OCI-LY7 (cell line): ENCODE measurements at regions of chr1 and their contacts with region 1.

Region 1: GRCh38 chr1:148334339-148335130 is 148.6 kb downstream of the PPIAL4G start:
- DNase-seq: peak; percentile 91
- H3K4me3 ChIP-seq: peak overlapping the region; percentile 70
- H3K27ac ChIP-seq: peak overlapping the region; percentile 80
- H3K4me1 ChIP-seq: peaks cover 31% of the 10 kb centered on the region
- CTCF ChIP-seq: no peak; the same call in 1 of the 2 replicates

Region 2: DNA sequence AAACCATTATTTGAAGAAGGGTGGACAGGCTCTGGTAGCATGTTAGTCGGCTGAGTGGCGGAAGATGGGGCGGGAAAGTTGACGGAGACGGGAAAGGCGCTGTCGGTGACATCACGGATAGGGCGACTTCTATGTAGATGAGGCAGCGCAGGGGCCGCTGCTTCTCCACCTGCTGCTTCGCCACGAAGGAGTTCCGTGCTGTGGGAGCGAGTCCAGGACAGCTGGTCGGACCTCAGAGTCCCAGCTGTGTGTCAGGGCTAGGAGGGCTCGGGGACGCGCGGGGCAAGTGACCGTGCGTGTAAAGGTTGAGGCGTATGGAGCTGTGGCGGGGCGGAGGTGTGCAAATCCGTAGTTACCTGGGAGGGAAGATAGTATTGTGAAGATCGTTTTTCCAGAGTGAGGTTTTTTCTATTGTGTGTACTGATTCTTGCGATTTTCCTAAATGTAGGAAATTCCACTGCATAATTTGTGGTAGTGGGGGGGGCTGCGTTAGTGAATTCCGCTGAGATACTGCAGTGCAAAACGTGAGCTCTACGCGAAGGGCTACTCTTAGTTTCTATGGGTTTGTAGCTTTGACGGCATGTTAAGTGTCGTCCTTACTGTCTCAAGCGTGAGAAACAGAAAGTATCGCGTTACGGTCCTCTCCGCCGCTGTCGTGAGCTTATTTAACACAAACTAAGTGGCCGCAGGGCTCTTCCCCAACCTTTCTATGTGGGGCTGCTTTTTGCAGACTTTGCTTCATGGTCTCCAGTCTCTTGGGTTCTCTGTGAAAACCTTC is 71.2 kb before region 1 on chr1:
- CTCF ChIA-PET with region 1: no interaction called
- POLR2A ChIA-PET with region 1: interaction called, 13 read pairs
- intact Hi-C with region 1: loop called (anchors 5 kb)
- DNase-seq: peak; percentile 73
- H3K4me3 ChIP-seq: peak overlapping the region; percentile 67
- H3K27ac ChIP-seq: no peak overlapping the region
- H3K4me1 ChIP-seq: no peaks in the 10 kb centered on the region
- CTCF ChIP-seq: no peak

Region 3: GRCh38 chr1:148372731-148373130 is 38.2 kb after region 1 on chr1:
- CTCF ChIA-PET with region 1: no interaction called
- POLR2A ChIA-PET with region 1: interaction called, 4 read pairs
- intact Hi-C with region 1: loop called (anchors 5 kb)
- DNase-seq: no peak
- H3K4me3 ChIP-seq: no peak overlapping the region
- H3K27ac ChIP-seq: no peak overlapping the region
- H3K4me1 ChIP-seq: peaks cover 33% of the 10 kb centered on the region
- CTCF ChIP-seq: no peak